ENCODE measurements at regions of chr1 and their contacts with region 1.

Region 1: DNA sequence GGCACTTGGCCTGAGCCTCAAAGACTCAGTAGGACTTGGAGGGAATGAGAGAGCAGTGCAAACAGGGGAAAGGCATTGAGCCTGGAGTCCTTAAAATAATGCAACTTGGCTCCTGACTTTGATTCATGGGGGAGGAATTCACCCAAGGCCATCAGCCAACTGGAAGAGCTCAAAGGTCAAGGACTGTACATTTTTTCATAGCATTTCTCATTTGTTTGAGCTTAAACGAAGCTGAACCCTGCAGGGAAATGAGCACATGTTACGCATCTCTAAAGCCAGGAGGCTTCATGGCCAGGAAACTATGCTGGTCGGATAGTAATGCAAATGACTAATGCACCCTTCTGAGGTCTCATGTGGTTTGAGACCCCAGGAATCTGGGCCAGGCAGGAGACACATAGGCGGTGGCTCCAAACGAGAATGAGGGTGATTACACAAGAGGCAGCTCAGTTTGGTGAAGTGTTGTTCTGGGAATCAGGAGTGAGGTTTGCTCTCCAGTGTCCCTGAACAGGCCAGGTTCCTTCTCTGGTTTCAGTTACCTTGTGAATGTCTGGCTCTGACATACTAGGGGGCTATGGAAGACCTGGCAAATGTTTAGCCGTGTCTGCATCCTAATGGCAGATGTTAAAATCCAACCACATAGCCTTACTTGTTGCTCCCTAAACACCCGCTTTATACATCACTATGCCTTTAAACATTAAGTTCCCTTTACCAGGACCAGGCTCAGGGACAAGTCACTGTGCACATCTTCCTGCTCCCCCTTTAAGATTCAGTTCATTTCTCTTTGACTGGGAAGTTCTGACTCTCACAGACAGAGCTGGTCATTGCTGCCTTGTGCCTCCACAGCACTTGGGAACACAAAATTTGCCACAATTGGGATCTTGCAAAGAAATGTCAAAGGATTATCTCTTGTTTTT is 503.9 kb upstream of the USP24 start:
- DNase-seq: peak; percentile 100
- H3K4me3 ChIP-seq: no peak overlapping the region
- CTCF ChIP-seq: no peak

Region 2: GRCh38 chr1:55702064-55702463 is 17.0 kb before region 1 on chr1:
- CTCF ChIA-PET with region 1: interaction called, 25 read pairs
- POLR2A ChIA-PET with region 1: interaction called, 8 read pairs
- DNase-seq: no peak
- H3K4me3 ChIP-seq: no peak overlapping the region
- CTCF ChIP-seq: peak; percentile 27

Region 3: DNA sequence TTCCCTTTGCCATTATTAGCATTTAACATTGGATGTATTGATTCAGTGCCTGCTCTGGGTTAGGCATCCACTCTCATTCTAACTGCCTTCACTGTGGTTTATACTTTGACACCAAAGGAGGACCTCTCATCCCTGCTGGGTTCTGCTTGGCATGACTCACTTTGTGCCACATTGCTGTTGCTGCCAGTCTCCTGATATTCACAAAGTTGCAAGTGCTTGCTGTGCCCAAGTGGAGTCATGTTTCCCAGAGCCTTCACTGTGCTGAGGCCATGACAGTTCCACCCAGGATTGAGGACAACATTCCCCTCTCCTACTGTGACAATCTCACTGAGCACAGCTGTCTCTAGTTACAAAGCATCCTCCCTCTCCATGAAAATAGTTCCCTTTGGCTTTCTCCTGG is 16.1 kb after region 1 on chr1:
- CTCF ChIA-PET with region 1: no interaction called
- POLR2A ChIA-PET with region 1: no interaction called
- DNase-seq: no peak
- H3K4me3 ChIP-seq: no peak overlapping the region
- CTCF ChIP-seq: no peak